Spleen (tissue), 13 donors: ENCODE measurements at regions of chr11 and their contacts with region 1.

Region 1: GRCh38 chr11:18634140-18635032 is at the start of gene SPTY2D1:
- DNase-seq: peak; percentile 100
- H3K4me3 ChIP-seq: peak within 1 kb of the TSS; percentile 70 to 98 (median 90)
- H3K27ac ChIP-seq: peak within 1 kb of the TSS; percentile 92 to 97 (median 95)
- H3K4me1 ChIP-seq: peaks cover 13 to 51% (median 33%) of the 10 kb centered on the region in 6 donors
- H3K27me3 ChIP-seq: no peaks in the 10 kb centered on the region
- CTCF ChIP-seq: peak in 3 of 11 experiments; percentile 33 to 60 (median 54)
- POLR2A ChIP-seq: peak; percentile 12 to 73 (median 62)
- total RNA-seq, gene SPTY2D1: 16.2 to 23.1 (median 19.1) TPM

Region 2: GRCh38 chr11:18698341-18699268 is 64.2 kb after region 1 on chr11 and contains the start of gene TMEM86A:
- intact Hi-C with region 1: loop called (anchors 10 kb)
- DNase-seq: peak; percentile 98
- H3K4me3 ChIP-seq: peak within 1 kb of the TSS; percentile 70 to 91 (median 87)
- H3K27ac ChIP-seq: peak within 1 kb of the TSS; percentile 27 to 91 (median 82)
- H3K4me1 ChIP-seq: peaks cover 4 to 31% (median 23%) of the 10 kb centered on the region in 6 donors
- H3K27me3 ChIP-seq: peaks cover 0 to 12% (median 0%) of the 10 kb centered on the region in 7 donors
- CTCF ChIP-seq: no peak
- POLR2A ChIP-seq: peak in 1 of 3 donors; percentile 7
- total RNA-seq, gene TMEM86A: 5.1 to 25.0 (median 17.0) TPM

Region 3: GRCh38 chr11:18907391-18907790 is 273.0 kb after region 1 on chr11:
- intact Hi-C with region 1: no loop called
- DNase-seq: no peak
- H3K4me3 ChIP-seq: no peak overlapping the region
- H3K27ac ChIP-seq: no peak overlapping the region
- H3K4me1 ChIP-seq: no peaks in the 10 kb centered on the region
- H3K27me3 ChIP-seq: no peaks in the 10 kb centered on the region
- CTCF ChIP-seq: no peak
- POLR2A ChIP-seq: no peak

Region 4: GRCh38 chr11:19116971-19117750 is 482.8 kb after region 1 on chr11 and contains the start of gene ZDHHC13:
- intact Hi-C with region 1: no loop called
- DNase-seq: peak; percentile 99
- H3K4me3 ChIP-seq: peak within 1 kb of the TSS; percentile 72 to 95 (median 92)
- H3K27ac ChIP-seq: peak within 1 kb of the TSS in 7 of 8 donors; percentile 36 to 88 (median 61)
- H3K4me1 ChIP-seq: peaks cover 5 to 53% (median 39%) of the 10 kb centered on the region in 6 donors
- H3K27me3 ChIP-seq: no peaks in the 10 kb centered on the region
- CTCF ChIP-seq: peak in 2 of 11 experiments; percentile 14 to 16
- POLR2A ChIP-seq: no peak
- total RNA-seq, gene ZDHHC13: 10.9 to 20.4 (median 12.8) TPM

Region 5: DNA sequence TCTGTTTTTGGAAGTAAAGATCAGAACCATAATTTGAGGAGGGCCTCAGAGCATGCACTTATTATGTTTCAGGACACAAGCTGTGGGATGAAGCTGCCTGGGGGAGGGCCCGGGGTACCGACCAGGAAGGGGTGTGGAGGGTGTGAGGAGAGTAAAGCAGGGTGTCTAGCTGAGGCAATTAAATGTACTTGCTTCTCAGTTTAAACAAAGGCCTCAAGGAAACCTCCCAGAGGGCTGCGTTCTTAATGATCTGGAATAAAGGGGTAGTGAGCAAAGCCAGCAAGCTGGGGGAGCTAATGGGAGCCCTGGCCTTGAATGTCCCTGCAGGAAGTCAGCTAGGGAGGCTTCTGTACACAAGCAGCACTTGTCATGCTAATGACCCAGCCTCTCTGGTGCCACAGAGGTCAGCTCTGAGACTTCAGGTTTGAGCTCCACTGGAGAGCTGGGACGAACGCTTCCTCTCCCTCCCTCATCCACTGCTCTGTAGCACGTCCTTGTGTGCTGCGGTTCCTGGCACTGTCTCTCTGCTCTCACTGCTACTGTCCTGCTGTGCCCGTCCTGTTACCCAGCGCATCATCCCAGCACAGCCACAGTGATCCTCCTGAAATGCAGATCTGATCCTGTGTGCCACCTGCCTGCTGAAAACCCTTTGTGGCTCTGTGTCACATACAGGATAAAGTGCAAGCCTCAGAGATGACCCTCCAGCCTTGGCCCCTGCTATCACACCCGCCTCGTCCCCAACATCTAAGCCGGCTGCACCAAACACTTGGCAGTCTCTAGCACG is 1366.2 kb after region 1 on chr11:
- intact Hi-C with region 1: no loop called
- DNase-seq: no peak
- H3K4me3 ChIP-seq: no peak overlapping the region
- H3K27ac ChIP-seq: no peak overlapping the region
- H3K4me1 ChIP-seq: peaks cover 0 to 16% (median 10%) of the 10 kb centered on the region in 6 donors
- H3K27me3 ChIP-seq: no peaks in the 10 kb centered on the region
- CTCF ChIP-seq: no peak
- POLR2A ChIP-seq: no peak